AG04450 (cell line): ENCODE measurements at regions of chr5 and their contacts with region 1.

Region 1: GRCh38 chr5:126544087-126544740 is 50.8 kb downstream of the ALDH7A1 start:
- DNase-seq: no peak
- H3K4me3 ChIP-seq: no peak overlapping the region
- H3K27ac ChIP-seq: no peak overlapping the region
- H3K27me3 ChIP-seq: no peaks in the 10 kb centered on the region
- CTCF ChIP-seq: peak; percentile 60

Region 2: GRCh38 chr5:126801992-126802294 is 257.7 kb after region 1 on chr5:
- CTCF ChIA-PET with region 1: interaction called, 10 read pairs
- POLR2A ChIA-PET with region 1: no interaction called
- DNase-seq: no peak
- H3K4me3 ChIP-seq: no peak overlapping the region
- H3K27ac ChIP-seq: no peak overlapping the region
- H3K27me3 ChIP-seq: no peaks in the 10 kb centered on the region
- CTCF ChIP-seq: peak; percentile 59

Region 3: GRCh38 chr5:126818736-126819135 is 274.5 kb after region 1 on chr5:
- CTCF ChIA-PET with region 1: no interaction called
- POLR2A ChIA-PET with region 1: no interaction called
- DNase-seq: no peak
- H3K4me3 ChIP-seq: no peak overlapping the region
- H3K27ac ChIP-seq: no peak overlapping the region
- H3K27me3 ChIP-seq: no peaks in the 10 kb centered on the region
- CTCF ChIP-seq: no peak